Sigmoid colon (tissue), 7 donors: ENCODE measurements at regions of chr12 and their contacts with region 1.

Region 1: GRCh38 chr12:16622338-16622737 is 16.4 kb upstream of the LMO3 start:
- DNase-seq: no peak
- H3K4me3 ChIP-seq: no peak overlapping the region
- H3K27ac ChIP-seq: no peak overlapping the region
- H3K4me1 ChIP-seq: peaks cover 0 to 13% (median 0%) of the 10 kb centered on the region in 4 donors
- H3K27me3 ChIP-seq: no peaks in the 10 kb centered on the region
- CTCF ChIP-seq: no peak
- EP300 ChIP-seq: no peak
- POLR2A ChIP-seq: no peak

Region 2: GRCh38 chr12:17642340-17642650 is 1020.0 kb after region 1 on chr12:
- intact Hi-C with region 1: loop called (anchors 10 kb)
- DNase-seq: no peak
- H3K4me3 ChIP-seq: peak overlapping the region in 1 of 4 donors; percentile 41
- H3K27ac ChIP-seq: no peak overlapping the region
- H3K4me1 ChIP-seq: peaks cover 0 to 4% (median 0%) of the 10 kb centered on the region in 4 donors
- H3K27me3 ChIP-seq: no peaks in the 10 kb centered on the region
- CTCF ChIP-seq: no peak
- EP300 ChIP-seq: no peak
- POLR2A ChIP-seq: no peak